Right lobe of liver (tissue), 6 donors: ENCODE measurements at regions of chr17 and their contacts with region 1.

Region 1: DNA sequence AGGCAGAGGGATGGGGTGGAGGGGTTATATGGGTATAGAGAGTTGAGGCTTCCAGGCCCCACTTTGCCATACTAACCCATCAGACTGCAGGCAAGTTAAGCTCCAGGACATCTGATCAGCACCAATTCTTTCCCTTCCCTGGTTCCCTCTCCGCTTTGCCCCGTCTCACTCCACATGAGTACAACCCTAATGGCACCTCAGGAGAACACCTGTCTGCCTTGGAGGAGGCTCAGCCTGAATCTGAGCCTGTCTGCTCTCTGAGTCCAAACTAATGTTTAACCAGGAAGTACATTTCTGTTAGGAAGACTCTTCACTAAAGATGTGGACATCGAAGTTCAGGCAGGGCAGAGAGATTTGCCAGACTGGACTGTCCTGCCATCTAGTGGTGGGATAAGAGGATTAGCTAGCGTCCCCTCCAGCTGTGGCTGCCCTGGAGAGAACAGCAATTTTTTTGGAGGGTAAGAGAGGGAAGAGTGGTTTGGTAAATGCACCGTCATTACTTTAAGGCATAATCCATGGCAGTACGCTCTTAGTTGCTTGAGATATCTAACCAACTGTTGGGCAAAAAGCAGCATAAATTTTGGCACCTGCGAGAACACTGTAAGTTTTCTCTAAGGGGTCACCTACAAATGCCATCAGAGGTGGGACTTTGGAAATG is 29.2 kb upstream of the LRRC75A start:
- DNase-seq: peak; percentile 58 to 79 (median 68)
- ATAC-seq: peak; percentile 98 to 100 (median 100)
- H3K4me3 ChIP-seq: no peak overlapping the region
- H3K27ac ChIP-seq: no peak overlapping the region
- H3K4me1 ChIP-seq: peaks cover 0 to 5% (median 2%) of the 10 kb centered on the region in 4 donors
- H3K27me3 ChIP-seq: no peaks in the 10 kb centered on the region
- CTCF ChIP-seq: peak; percentile 92 to 95 (median 95)
- POLR2A ChIP-seq: no peak

Region 2: GRCh38 chr17:16419074-16419928 is 101.9 kb before region 1 on chr17:
- intact Hi-C with region 1: no loop called
- DNase-seq: no peak
- ATAC-seq: no peak
- H3K4me3 ChIP-seq: no peak overlapping the region
- H3K27ac ChIP-seq: no peak overlapping the region
- H3K4me1 ChIP-seq: no peaks in the 10 kb centered on the region
- H3K27me3 ChIP-seq: no peaks in the 10 kb centered on the region
- CTCF ChIP-seq: no peak
- POLR2A ChIP-seq: no peak

Region 3: DNA sequence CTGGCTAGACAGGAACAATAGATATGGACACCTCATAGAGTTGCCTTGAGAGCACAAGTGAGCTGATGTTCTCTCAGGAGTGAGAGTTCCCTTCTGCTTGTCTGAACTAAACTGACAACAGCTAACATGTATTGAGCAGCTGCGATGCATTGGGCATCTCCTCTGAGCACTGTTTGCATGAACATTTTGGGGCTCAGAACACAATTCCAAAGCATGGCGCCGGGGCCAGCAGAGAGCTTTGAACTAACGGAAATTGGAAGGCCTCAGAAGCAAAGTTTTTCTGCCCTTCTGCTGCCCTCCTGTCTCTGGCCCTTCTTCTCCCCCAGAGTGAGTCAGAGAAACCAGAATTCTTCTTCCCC is 67.7 kb before region 1 on chr17:
- intact Hi-C with region 1: loop called (anchors 5 kb)
- DNase-seq: no peak
- ATAC-seq: no peak
- H3K4me3 ChIP-seq: no peak overlapping the region
- H3K27ac ChIP-seq: no peak overlapping the region
- H3K4me1 ChIP-seq: no peaks in the 10 kb centered on the region
- H3K27me3 ChIP-seq: no peaks in the 10 kb centered on the region
- CTCF ChIP-seq: no peak
- POLR2A ChIP-seq: no peak

Region 4: DNA sequence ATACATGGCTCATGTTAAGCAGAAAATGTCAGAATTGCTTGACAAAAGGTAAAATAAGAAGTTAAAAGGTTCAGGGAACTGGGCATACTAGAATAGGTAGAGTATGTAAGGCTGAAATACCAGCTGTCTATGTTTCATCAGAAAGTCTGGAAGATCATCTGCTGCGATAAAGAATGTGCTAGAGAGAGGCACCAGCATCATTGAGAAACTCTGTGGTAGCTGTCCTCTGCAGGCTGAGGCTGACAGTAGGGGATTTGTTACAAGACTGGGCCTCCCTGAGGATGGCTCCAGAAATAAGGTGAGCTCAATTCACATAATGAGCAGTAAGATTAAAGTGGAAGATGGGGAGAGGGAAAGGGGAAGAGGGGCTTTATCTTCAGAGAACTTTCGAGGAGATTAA is 52.3 kb after region 1 on chr17:
- intact Hi-C with region 1: no loop called
- DNase-seq: no peak
- ATAC-seq: no peak
- H3K4me3 ChIP-seq: no peak overlapping the region
- H3K27ac ChIP-seq: no peak overlapping the region
- H3K4me1 ChIP-seq: no peaks in the 10 kb centered on the region
- H3K27me3 ChIP-seq: peaks cover 0 to 6% of the 10 kb centered on the region in 2 donors
- CTCF ChIP-seq: no peak
- POLR2A ChIP-seq: no peak

Region 5: DNA sequence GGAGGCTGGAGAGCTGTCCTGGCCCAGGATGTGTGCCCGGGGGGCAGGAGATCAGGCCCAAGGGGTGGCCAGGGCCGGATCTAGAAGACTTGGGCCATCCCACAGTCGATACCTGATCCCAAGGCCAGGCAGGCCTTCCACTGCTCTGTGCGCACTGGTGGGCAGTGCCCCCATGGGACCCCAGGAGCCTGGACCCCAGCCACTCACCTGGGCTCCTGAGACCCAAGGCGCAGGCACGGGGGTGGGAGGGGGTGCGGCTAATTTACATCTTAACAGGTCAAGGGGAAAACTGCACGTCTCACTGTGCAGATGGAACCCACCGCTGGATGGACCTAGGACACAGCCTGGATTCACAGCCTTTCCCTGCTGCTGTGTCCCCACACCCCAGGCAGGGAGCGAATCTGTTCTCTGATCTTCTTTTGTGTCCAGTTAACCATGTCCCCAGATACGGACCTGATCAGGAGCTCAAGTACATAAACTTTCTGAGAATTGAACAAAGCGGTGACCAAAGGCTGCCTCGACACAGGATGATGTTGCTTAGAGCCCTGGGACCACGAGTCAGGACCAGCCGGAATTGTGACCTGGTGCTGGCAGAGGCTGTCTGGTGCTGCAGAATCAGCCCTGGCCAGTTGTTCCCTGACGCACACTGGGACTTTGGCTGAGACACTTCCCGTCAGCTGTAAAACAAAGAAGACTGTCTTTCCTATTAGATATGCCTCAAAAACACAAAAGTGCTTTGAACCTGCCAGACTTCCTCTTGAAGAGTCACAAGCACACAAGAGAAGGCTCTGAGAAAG is 390.1 kb after region 1 on chr17:
- intact Hi-C with region 1: no loop called
- DNase-seq: peak in 1 of 3 donors; percentile 37
- ATAC-seq: peak; percentile 55 to 89 (median 74)
- H3K4me3 ChIP-seq: no peak overlapping the region
- H3K27ac ChIP-seq: no peak overlapping the region
- H3K4me1 ChIP-seq: no peaks in the 10 kb centered on the region
- H3K27me3 ChIP-seq: no peaks in the 10 kb centered on the region
- CTCF ChIP-seq: no peak
- POLR2A ChIP-seq: no peak